Aorta (tissue), 5 donors: ENCODE measurements at regions of chr9 and their contacts with region 1.

Region 1: DNA sequence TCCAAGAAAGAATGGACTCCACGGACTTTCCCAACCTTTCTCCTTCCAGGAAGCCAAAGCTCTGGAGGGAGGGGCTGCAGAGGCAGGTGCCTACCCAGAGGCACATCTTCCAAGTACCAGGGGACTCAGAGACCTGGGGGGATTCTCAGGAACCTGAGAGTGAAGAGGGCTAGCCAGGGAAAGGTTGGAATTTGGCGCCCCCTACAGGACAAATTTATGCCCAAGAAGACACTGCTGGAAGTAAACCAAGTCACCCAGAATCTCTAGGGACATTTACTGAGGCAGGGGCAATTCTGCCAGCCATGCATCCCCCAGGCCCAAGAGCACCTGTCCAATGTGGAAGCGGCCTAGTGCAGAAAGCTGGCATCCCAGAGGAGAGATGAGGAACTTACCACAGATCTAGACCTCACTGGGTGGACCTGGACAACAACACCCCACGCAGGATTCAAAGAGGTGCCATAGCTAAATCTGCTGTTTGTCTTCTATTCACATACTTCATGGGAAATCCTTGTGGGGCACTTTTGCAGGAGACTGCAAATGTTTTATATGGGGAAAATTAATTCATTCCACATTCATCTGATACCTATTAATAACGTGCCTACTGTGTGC is 25.9 kb upstream of the IDNK start:
- DNase-seq: no peak
- ATAC-seq: no peak
- H3K4me3 ChIP-seq: no peak overlapping the region
- H3K27ac ChIP-seq: no peak overlapping the region
- H3K4me1 ChIP-seq: no peaks in the 10 kb centered on the region
- H3K27me3 ChIP-seq: no peaks in the 10 kb centered on the region

Region 2: DNA sequence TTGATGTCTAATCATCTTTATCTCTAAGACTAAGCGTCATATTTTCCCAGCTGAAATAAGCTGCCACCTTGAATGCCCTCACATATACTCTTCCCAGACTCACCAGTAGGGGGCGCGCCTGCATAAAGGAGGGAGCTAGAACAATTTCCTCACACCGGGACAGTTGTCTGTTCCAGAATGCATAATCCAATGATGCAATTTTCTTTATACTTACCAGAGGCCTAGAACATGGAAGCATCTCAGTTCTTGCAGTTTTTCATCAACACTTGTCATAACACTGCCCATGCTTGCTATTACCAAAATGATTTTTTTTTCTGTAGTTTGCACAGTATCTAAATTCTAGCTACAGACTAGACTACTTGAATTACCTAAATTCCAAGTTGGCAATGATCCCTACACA is 262.7 kb before region 1 on chr9:
- intact Hi-C with region 1: loop called (anchors 2 to 5 kb)
- DNase-seq: peak; percentile 86 to 93
- ATAC-seq: peak; percentile 92
- H3K4me3 ChIP-seq: no peak overlapping the region
- H3K27ac ChIP-seq: no peak overlapping the region
- H3K4me1 ChIP-seq: no peaks in the 10 kb centered on the region
- H3K27me3 ChIP-seq: no peaks in the 10 kb centered on the region

Region 3: DNA sequence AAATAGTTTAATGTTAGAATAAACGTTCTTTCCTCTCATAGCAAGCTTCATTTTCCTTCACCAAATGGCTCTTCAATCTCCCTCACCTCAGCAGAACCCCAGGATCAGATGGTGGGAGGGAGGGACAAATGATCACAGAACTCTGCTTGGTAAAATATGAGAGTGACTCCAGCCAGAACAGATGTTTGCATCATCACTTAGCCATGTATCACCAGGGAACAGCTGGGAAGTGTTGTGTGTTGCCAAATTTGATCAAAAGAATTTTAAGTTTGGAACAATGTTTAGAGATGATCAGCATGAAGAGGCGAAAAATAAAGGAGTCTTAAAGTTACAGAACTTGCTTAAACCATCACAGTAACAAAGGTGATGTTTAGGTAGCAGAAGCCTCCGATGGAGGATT is 174.5 kb before region 1 on chr9:
- intact Hi-C with region 1: no loop called
- DNase-seq: no peak
- ATAC-seq: no peak
- H3K4me3 ChIP-seq: no peak overlapping the region
- H3K27ac ChIP-seq: no peak overlapping the region
- H3K4me1 ChIP-seq: peaks cover 2 to 5% of the 10 kb centered on the region in 2 donors
- H3K27me3 ChIP-seq: no peaks in the 10 kb centered on the region

Region 4: GRCh38 chr9:83444110-83444509 is 152.9 kb before region 1 on chr9:
- intact Hi-C with region 1: no loop called
- DNase-seq: peak; percentile 77 to 86
- ATAC-seq: peak; percentile 79
- H3K4me3 ChIP-seq: no peak overlapping the region
- H3K27ac ChIP-seq: peak overlapping the region in 1 of 2 donors; percentile 58
- H3K4me1 ChIP-seq: peaks cover 6 to 14% of the 10 kb centered on the region in 2 donors
- H3K27me3 ChIP-seq: no peaks in the 10 kb centered on the region

Region 5: GRCh38 chr9:83688921-83689320 is 91.9 kb after region 1 on chr9:
- intact Hi-C with region 1: no loop called
- DNase-seq: no peak
- ATAC-seq: no peak
- H3K4me3 ChIP-seq: no peak overlapping the region
- H3K27ac ChIP-seq: no peak overlapping the region
- H3K4me1 ChIP-seq: peaks cover 2 to 5% of the 10 kb centered on the region in 2 donors
- H3K27me3 ChIP-seq: no peaks in the 10 kb centered on the region